Astrocyte of the cerebellum (primary cell): ENCODE measurements at regions of chr6 and their contacts with region 1.

Region 1: GRCh38 chr6:168120390-168121302 is 41.6 kb upstream of the FRMD1 start:
- DNase-seq: no peak
- H3K4me3 ChIP-seq: no peak overlapping the region
- CTCF ChIP-seq: no peak

Region 2: DNA sequence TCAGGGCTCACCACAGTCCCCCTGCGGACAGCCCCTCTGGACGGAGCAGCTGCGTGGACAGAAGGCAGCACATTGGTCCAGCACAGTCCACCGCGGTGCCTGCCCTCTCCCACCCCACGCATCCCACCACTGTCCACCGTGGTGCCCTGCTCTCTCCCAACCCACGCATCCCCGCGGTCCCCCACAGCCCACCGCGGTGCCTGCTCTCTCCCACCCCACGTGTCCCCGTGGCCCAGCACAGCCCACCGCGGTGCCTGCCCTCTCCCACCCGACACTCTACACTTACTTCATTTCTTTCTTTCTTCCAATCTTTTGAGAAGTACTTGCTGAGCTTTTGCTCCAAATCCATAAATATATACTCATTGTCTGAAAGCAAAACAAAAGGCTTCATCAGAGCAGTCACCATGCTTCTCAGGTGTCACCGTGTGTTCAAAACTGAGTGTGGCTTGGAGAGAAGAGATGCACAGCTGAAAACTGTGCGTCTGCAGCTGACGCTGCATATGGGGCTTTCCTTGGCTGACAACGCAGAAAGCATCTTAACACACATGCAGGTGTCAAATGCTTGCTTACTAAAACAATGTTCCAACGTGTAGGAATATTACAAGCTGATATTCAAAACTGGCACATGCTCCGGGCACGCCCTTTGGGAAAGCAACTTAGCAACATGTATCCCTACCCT is 53.4 kb before region 1 on chr6:
- in situ Hi-C with region 1: loop called (anchors 5 kb)
- DNase-seq: no peak
- H3K4me3 ChIP-seq: no peak overlapping the region
- CTCF ChIP-seq: no peak

Region 3: GRCh38 chr6:168201383-168201782 is 80.7 kb after region 1 on chr6:
- in situ Hi-C with region 1: loop called (anchors 5 kb)
- DNase-seq: no peak
- H3K4me3 ChIP-seq: no peak overlapping the region
- CTCF ChIP-seq: no peak